ENCODE measurements at regions of chr3 and their contacts with region 1.

Region 1: DNA sequence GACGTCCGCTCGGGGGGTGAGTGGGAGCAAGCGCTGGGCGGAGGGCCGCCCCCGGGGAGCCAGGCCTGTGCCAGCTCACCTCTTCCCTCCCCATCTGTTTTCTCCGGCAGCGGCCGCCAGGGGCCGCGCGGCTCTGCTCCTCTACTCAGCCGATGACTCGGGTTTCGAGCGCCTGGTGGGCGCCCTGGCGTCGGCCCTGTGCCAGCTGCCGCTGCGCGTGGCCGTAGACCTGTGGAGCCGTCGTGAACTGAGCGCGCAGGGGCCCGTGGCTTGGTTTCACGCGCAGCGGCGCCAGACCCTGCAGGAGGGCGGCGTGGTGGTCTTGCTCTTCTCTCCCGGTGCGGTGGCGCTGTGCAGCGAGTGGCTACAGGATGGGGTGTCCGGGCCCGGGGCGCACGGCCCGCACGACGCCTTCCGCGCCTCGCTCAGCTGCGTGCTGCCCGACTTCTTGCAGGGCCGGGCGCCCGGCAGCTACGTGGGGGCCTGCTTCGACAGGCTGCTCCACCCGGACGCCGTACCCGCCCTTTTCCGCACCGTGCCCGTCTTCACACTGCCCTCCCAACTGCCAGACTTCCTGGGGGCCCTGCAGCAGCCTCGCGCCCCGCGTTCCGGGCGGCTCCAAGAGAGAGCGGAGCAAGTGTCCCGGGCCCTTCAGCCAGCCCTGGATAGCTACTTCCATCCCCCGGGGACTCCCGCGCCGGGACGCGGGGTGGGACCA is 632 bp upstream of the CRELD1 start:
- DNase-seq: peak; percentile 78 to 94 (median 85)
- ATAC-seq: peak; percentile 50
- H3K4me3 ChIP-seq: peak overlapping the region; percentile 65
- H3K4me3 Mint-ChIP-seq: peak overlapping the region; percentile 99
- H3K27ac ChIP-seq: peak overlapping the region; percentile 90 to 91
- H3K27ac Mint-ChIP-seq: peak overlapping the region; percentile 99
- H3K4me1 ChIP-seq: peaks cover 45% of the 10 kb centered on the region
- H3K4me1 Mint-ChIP-seq: peaks cover 65% of the 10 kb centered on the region
- H3K27me3 ChIP-seq: no peaks in the 10 kb centered on the region
- H3K27me3 Mint-ChIP-seq: no peaks in the 10 kb centered on the region
- CTCF ChIP-seq: peak; percentile 87

Region 2: DNA sequence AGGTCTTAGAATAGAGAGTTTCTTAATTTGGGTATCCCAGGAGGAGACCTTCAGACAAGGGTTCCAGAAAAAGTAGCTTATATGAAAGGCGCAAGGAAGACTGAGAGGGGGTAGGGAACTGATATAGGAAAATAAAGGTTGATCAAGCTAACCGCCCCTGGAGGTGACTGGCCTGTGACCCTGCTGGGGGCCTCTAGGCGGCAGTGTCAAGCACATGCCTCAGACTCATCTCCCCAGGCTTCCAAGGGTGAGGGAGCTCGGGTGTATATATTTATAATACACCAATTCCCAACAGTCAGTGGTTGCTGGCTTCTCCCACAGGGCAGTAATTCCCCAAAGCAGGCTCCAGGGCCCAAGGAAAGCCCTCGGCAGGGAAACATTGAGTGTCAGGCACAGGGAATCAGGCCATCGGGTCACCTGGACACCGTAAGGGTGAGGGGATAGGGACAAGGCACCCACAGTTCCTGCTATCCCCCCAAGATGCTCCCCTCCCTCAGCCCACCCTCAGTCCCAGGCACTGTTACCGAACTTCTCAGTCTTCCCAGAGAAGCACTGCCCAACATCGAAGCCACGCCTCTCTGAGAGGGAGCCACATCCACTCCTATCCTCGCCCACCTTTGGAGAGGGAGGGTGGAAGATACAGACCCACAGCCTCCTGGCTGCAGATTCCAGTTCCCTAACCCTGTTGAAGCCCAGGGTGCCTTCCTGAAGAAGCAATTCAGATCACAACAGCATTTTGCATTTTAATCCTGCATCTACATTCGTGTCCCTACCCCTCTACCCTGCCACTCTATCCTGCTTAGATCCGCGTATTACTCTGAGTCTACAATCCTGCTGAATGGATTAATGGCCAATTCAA is 1218.9 kb before region 1 on chr3:
- CTCF ChIA-PET with region 1: no interaction called
- POLR2A ChIA-PET with region 1: no interaction called
- intact Hi-C with region 1: no loop called
- DNase-seq: no peak
- ATAC-seq: no peak
- H3K4me3 ChIP-seq: no peak overlapping the region
- H3K4me3 Mint-ChIP-seq: no peak overlapping the region
- H3K27ac ChIP-seq: no peak overlapping the region
- H3K27ac Mint-ChIP-seq: no peak overlapping the region
- H3K4me1 ChIP-seq: no peaks in the 10 kb centered on the region
- H3K4me1 Mint-ChIP-seq: no peaks in the 10 kb centered on the region
- H3K27me3 ChIP-seq: peaks cover 0 to 2% of the 10 kb centered on the region in 2 experiments
- H3K27me3 Mint-ChIP-seq: peaks cover 5% of the 10 kb centered on the region
- CTCF ChIP-seq: no peak

Region 3: DNA sequence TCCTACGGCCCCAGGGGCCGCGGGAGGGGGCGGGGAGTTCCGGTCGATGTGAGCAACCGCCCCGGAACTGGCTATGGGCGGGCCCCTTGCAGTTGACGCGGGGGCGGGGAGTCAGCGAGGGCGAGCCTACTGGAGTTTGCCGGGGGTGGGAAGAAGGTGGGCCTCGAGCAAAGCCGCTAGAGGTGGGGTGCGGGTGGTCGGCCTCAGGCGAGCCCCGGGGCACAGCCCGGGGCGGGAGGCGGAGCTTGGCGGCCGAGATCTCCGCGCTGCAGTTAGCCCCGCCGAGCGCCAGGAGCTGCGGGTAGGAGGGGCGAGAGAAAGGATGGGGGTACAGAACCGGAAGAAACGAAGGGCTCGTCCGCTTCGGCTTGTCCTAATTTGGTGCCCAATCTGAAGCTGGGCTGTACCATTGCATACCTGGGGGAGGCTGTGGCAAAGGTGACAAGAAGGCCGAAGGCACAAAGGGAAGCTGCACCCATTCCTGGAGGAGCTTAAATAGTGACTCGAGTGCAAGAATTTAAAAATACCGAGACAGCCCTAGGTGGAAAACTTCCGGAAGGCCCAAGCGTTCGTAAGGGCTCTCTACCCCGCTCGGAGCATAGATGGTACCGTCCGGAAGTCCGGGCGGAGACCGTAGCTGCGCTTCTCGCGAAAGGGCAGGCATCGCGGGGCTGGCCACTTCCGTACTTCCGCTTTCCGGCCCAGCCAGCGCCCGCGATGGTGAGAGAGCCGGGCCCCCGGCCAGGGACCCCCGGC is 140.4 kb before region 1 on chr3 and contains the starts of genes ARPC4 and TADA3:
- CTCF ChIA-PET with region 1: interaction called, 6 read pairs
- POLR2A ChIA-PET with region 1: interaction called, 34 read pairs
- intact Hi-C with region 1: no loop called
- DNase-seq: peak; percentile 82 to 96 (median 88)
- ATAC-seq: peak; percentile 85
- H3K4me3 ChIP-seq: peak within 1 kb of the TSS; percentile 99
- H3K4me3 Mint-ChIP-seq: peak within 1 kb of the TSS; percentile 99
- H3K27ac ChIP-seq: peak within 1 kb of the TSS; percentile 95 to 98
- H3K27ac Mint-ChIP-seq: peak within 1 kb of the TSS; percentile 99
- H3K4me1 ChIP-seq: peaks cover 64% of the 10 kb centered on the region
- H3K4me1 Mint-ChIP-seq: peaks cover 76% of the 10 kb centered on the region
- H3K27me3 ChIP-seq: no peaks in the 10 kb centered on the region
- H3K27me3 Mint-ChIP-seq: no peaks in the 10 kb centered on the region
- CTCF ChIP-seq: no peak
- total RNA-seq, gene ARPC4: 88.7 to 91.3 TPM
- total RNA-seq, gene TADA3: 14.7 to 16.5 TPM

Region 4: GRCh38 chr3:9820944-9821532 is 112.0 kb before region 1 on chr3:
- CTCF ChIA-PET with region 1: no interaction called
- POLR2A ChIA-PET with region 1: no interaction called
- intact Hi-C with region 1: no loop called
- DNase-seq: no peak
- ATAC-seq: no peak
- H3K4me3 ChIP-seq: no peak overlapping the region
- H3K4me3 Mint-ChIP-seq: no peak overlapping the region
- H3K27ac ChIP-seq: no peak overlapping the region
- H3K27ac Mint-ChIP-seq: no peak overlapping the region
- H3K4me1 ChIP-seq: no peaks in the 10 kb centered on the region
- H3K4me1 Mint-ChIP-seq: no peaks in the 10 kb centered on the region
- H3K27me3 ChIP-seq: no peaks in the 10 kb centered on the region
- H3K27me3 Mint-ChIP-seq: no peaks in the 10 kb centered on the region
- CTCF ChIP-seq: no peak

Region 5: GRCh38 chr3:9862391-9863057 is 70.5 kb before region 1 on chr3:
- CTCF ChIA-PET with region 1: no interaction called
- POLR2A ChIA-PET with region 1: no interaction called
- intact Hi-C with region 1: no loop called
- DNase-seq: peak in 7 of 14 experiments; percentile 10 to 58 (median 30)
- ATAC-seq: peak; percentile 61
- H3K4me3 ChIP-seq: no peak overlapping the region
- H3K4me3 Mint-ChIP-seq: no peak overlapping the region
- H3K27ac ChIP-seq: no peak overlapping the region
- H3K27ac Mint-ChIP-seq: no peak overlapping the region
- H3K4me1 ChIP-seq: peaks cover 9% of the 10 kb centered on the region
- H3K4me1 Mint-ChIP-seq: no peaks in the 10 kb centered on the region
- H3K27me3 ChIP-seq: peaks cover 11 to 17% of the 10 kb centered on the region in 2 experiments
- H3K27me3 Mint-ChIP-seq: peaks cover 9% of the 10 kb centered on the region
- CTCF ChIP-seq: no peak

Region 6: DNA sequence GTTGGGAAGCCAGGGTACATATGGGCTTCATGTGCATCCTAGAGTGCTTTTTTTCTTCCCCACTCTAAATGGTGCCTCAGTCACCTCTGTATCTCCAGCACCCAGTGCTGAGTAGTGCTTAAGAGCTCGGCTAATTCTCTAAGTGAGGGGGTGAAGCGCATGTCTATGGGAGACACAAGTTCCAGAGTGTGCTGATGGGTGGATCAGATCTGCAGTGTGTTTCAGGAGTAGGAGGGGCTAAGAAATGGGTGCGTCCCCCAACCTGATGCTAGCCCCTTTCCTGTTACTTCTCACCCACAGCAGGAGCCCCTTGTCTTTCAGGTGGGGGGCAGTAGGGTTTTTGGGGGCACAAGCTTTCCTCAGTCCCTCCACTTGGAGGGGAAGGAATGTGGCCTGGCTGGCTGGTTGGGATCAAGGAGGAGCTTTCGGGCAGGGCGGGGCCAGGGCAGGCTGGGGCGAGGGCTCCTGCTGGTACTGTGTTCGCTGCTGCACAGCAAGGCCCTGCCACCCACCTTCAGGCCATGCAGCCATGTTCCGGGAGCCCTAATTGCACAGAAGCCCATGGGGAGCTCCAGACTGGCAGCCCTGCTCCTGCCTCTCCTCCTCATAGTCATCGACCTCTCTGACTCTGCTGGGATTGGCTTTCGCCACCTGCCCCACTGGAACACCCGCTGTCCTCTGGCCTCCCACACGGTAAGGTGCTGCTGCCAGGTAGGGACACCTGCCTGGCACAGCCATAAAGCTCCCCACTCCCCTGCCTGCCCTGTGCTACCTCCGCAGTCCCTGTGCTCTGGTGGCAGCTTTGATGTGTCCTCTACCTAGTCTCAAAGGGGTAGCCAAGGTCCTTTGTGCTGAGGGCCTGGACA is 30.4 kb before region 1 on chr3 and contains the start of gene IL17RE:
- CTCF ChIA-PET with region 1: interaction called, 4 read pairs
- POLR2A ChIA-PET with region 1: interaction called, 12 read pairs
- intact Hi-C with region 1: no loop called
- DNase-seq: peak in 4 of 14 experiments; percentile 9 to 46 (median 22)
- ATAC-seq: peak; percentile 60
- H3K4me3 ChIP-seq: peak within 1 kb of the TSS; percentile 28
- H3K4me3 Mint-ChIP-seq: peak within 1 kb of the TSS; percentile 68
- H3K27ac ChIP-seq: peak within 1 kb of the TSS in 1 of 2 donors; percentile 40
- H3K27ac Mint-ChIP-seq: peak within 1 kb of the TSS; percentile 63
- H3K4me1 ChIP-seq: peaks cover 25% of the 10 kb centered on the region
- H3K4me1 Mint-ChIP-seq: peaks cover 27% of the 10 kb centered on the region
- H3K27me3 ChIP-seq: no peaks in the 10 kb centered on the region
- H3K27me3 Mint-ChIP-seq: no peaks in the 10 kb centered on the region
- CTCF ChIP-seq: no peak
- total RNA-seq, gene IL17RE: 1.4 to 1.6 TPM

Region 7: GRCh38 chr3:9986237-9986725 is 53.3 kb after region 1 on chr3:
- CTCF ChIA-PET with region 1: interaction called, 18 read pairs
- POLR2A ChIA-PET with region 1: interaction called, 54 read pairs
- intact Hi-C with region 1: loop called (anchors 2 kb)
- DNase-seq: no peak
- ATAC-seq: peak; percentile 44
- H3K4me3 ChIP-seq: peak overlapping the region; percentile 99
- H3K4me3 Mint-ChIP-seq: peak overlapping the region; percentile 96
- H3K27ac ChIP-seq: peak overlapping the region; percentile 75 to 94
- H3K27ac Mint-ChIP-seq: peak overlapping the region; percentile 98
- H3K4me1 ChIP-seq: peaks cover 27% of the 10 kb centered on the region
- H3K4me1 Mint-ChIP-seq: peaks cover 27% of the 10 kb centered on the region
- H3K27me3 ChIP-seq: no peaks in the 10 kb centered on the region
- H3K27me3 Mint-ChIP-seq: no peaks in the 10 kb centered on the region
- CTCF ChIP-seq: no peak

Region 8: GRCh38 chr3:10192953-10193691 is 260.1 kb after region 1 on chr3:
- CTCF ChIA-PET with region 1: no interaction called
- POLR2A ChIA-PET with region 1: interaction called, 10 read pairs
- intact Hi-C with region 1: no loop called
- DNase-seq: peak in 13 of 14 experiments; percentile 33 to 83 (median 62)
- ATAC-seq: peak; percentile 51
- H3K4me3 ChIP-seq: peak overlapping the region; percentile 7
- H3K4me3 Mint-ChIP-seq: peak overlapping the region; percentile 86
- H3K27ac ChIP-seq: peak overlapping the region; percentile 89 to 90
- H3K27ac Mint-ChIP-seq: peak overlapping the region; percentile 96
- H3K4me1 ChIP-seq: peaks cover 96% of the 10 kb centered on the region
- H3K4me1 Mint-ChIP-seq: peaks cover 81% of the 10 kb centered on the region
- H3K27me3 ChIP-seq: no peaks in the 10 kb centered on the region
- H3K27me3 Mint-ChIP-seq: no peaks in the 10 kb centered on the region
- CTCF ChIP-seq: no peak

Region 9: DNA sequence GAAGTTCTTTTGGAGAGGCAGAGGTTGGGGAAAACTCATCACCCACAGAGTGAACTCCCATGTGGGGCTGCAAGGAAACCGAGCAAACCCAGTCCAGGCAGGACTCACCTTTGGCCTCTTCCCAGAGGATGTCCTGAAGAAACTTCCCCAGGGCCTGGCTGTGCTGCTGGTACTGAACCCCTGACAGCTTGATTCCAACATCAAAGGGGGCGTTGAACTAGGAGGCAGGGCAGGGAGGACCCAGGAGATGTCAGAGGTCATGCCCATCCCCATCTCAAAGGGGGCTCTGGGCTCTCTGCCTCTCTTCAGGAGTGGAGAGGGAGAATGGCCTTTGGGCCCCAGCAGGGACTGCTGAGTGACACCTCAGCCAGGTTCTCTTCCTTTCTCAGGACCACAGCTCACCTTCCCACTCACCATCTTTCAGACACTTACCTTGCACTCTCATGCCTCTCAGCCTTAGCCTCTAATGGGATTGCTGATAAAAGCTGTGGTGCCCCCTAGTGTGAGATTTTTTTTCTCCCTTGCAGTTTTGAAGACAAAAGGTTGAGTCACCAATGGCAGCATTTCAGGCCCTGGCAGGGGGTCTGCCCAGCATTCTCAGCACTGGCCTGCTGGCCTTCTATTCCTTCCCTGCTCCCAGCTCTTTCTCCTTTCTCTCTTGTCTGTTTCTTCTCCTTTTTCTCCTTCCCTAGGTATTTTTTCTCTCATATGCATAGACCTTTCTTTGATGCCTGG is 353.8 kb after region 1 on chr3:
- CTCF ChIA-PET with region 1: interaction called, 12 read pairs
- POLR2A ChIA-PET with region 1: no interaction called
- intact Hi-C with region 1: loop called in 1 of 2 experiments (anchors 10 kb)
- DNase-seq: peak in 5 of 14 experiments; percentile 28 to 71 (median 61)
- ATAC-seq: peak; percentile 39
- H3K4me3 ChIP-seq: no peak overlapping the region
- H3K4me3 Mint-ChIP-seq: no peak overlapping the region
- H3K27ac ChIP-seq: peak overlapping the region in 1 of 2 donors; percentile 21
- H3K27ac Mint-ChIP-seq: peak overlapping the region; percentile 50
- H3K4me1 ChIP-seq: peaks cover 19% of the 10 kb centered on the region
- H3K4me1 Mint-ChIP-seq: peaks cover 39% of the 10 kb centered on the region
- H3K27me3 ChIP-seq: no peaks in the 10 kb centered on the region
- H3K27me3 Mint-ChIP-seq: no peaks in the 10 kb centered on the region
- CTCF ChIP-seq: peak; percentile 52

Measured in CD4-positive, alpha-beta T cell (primary cell).